Adrenal gland (tissue), 19 donors: ENCODE measurements at regions of chr11 and their contacts with region 1.

Region 1: DNA sequence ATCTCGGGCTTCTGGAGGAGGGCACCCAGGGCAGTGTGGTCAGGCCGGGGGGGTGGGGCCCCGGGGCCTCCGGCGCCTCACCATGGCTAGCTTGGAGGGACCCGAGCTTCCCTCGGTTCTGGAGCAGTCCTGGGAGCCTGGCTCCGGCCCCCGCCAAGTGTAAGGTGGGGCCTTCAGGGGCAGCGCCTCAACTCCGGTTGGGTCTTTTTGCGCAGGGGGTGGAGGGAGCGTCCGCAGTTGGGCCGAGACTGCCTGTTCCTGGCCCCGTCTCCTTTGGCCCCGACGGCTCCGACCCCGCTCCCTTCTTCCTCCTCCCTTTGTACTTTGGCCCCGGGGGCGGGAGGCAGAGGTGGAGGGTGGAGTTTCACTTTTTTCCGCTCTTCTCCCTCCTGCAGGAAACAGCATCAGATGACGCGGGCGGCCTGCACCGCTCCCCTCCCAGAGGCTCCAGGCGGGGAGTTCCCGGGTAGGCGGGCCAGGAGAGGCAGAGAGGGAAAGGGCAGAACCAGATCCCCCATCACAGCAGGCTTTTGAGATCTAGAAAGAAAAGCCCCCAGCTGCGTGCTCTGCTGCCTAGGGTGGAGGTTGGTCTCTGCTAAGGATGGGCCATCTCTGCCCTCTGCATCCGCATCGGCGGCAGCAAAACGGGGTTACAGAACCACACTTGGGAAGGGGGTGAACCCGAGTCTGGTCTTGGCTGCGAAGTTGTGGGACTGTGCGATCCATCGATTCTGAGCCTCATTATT is at the start of gene MAP3K11:
- DNase-seq: peak; percentile 91 to 97 (median 95)
- H3K4me3 ChIP-seq: peak within 1 kb of the TSS; percentile 39 to 91 (median 79)
- H3K27ac ChIP-seq: peak within 1 kb of the TSS; percentile 75 to 95 (median 89)
- H3K4me1 ChIP-seq: peaks cover 21 to 54% of the 10 kb centered on the region in 2 donors
- H3K27me3 ChIP-seq: no peaks in the 10 kb centered on the region
- CTCF ChIP-seq: no peak
- POLR2A ChIP-seq: peak; percentile 60 to 88
- total RNA-seq, gene MAP3K11: 20.7 to 84.4 (median 55.7) TPM

Region 2: GRCh38 chr11:65569973-65570918 is 43.9 kb before region 1 on chr11 and contains the start of gene ZNRD2:
- intact Hi-C with region 1: loop called in 1 of 2 experiments (anchors 5 kb)
- DNase-seq: peak; percentile 96 to 99 (median 99)
- H3K4me3 ChIP-seq: peak within 1 kb of the TSS; percentile 18 to 87 (median 69)
- H3K27ac ChIP-seq: peak within 1 kb of the TSS; percentile 84 to 97 (median 94)
- H3K4me1 ChIP-seq: peaks cover 58 to 71% of the 10 kb centered on the region in 2 donors
- H3K27me3 ChIP-seq: no peaks in the 10 kb centered on the region
- CTCF ChIP-seq: peak in 5 of 6 experiments; percentile 39 to 60 (median 49)
- POLR2A ChIP-seq: peak in 1 of 2 donors; percentile 76
- total RNA-seq, gene ZNRD2: 34.0 to 83.4 (median 51.2) TPM

Region 3: DNA sequence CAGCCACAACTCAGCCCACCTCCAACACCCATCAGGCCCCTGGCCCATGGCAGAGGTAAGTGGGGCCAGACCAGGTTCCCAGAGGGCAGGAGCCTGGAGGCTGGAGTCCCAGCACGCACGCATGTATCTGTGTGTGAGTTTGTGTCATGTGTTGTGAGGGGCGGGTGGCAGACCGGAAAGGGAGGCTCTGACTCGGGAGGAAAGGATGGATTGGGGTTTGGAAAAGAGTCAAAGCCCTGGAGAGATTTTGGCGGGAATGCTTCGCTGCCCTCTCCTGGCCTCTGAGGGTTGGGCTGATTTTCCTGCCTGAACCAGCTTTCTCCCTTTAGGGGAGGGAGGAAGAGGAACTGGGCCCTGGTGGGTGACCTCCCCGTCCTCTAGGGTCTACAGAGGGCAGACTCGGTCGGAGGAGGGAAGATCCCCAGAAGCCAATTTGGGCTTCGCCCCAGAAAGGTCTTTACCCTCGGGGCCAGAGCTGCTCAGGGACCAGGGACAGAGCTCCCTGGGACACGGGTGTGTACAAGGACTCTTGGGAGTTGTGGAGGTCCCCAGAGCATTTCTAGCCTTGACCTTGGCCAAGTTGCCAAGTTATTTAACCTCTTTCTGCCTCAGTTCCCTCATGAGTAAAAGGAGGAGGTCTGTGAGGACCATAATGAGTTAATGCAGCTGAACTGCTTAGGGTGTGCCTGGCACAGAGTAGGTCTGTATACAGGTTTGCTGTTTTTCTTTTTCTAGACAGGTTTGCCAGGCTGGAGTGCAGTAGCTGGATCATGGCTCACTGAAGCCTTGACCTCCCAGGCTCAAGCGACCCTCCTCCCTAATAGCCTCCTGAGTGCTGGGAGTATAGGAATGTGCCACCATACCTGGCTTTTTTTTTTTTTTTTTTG is 297.8 kb after region 1 on chr11:
- intact Hi-C with region 1: no loop called
- DNase-seq: peak in 6 of 7 donors; percentile 23 to 52 (median 48)
- H3K4me3 ChIP-seq: no peak overlapping the region
- H3K27ac ChIP-seq: peak overlapping the region in 2 of 5 donors; percentile 34 to 75
- H3K4me1 ChIP-seq: peaks cover 15 to 28% of the 10 kb centered on the region in 2 donors
- H3K27me3 ChIP-seq: no peaks in the 10 kb centered on the region
- CTCF ChIP-seq: peak in 2 of 6 experiments; percentile 22
- POLR2A ChIP-seq: no peak